ENCODE measurements at regions of chr3 and their contacts with region 1.

Region 1: GRCh38 chr3:32934150-32934742 is 17.2 kb upstream of the CCR4 start:
- DNase-seq: no peak
- ATAC-seq: no peak
- H3K4me3 ChIP-seq: no peak overlapping the region
- H3K27ac ChIP-seq: no peak overlapping the region
- H3K4me1 ChIP-seq: no peaks in the 10 kb centered on the region
- H3K27me3 ChIP-seq: no peaks in the 10 kb centered on the region

Region 2: DNA sequence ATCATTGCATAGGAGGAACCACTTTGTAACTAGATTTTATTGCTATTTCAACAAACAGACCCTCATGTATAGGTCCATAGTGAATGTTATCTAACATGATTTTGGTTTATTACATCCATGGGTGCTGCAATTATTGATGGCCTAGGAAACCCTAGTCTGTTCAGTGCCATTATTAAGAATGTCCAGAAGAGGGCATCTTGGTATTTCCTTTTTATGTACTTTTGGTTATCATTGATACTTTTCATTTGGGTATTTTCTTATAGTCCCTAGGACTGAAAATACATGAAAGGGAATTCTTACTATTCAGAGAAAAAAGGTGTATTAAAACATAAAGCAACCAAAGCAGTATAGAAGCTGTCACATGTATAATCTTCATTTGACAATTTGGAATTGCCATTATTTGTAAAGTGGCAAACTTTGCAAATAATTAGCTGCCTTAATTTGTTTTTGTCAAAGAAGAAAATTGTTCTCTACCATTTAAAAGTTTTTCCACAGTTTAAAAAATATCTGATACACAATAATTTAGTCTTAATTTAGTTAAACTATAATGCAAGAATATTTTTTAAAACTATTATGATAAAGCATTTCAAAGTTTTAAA is 200.5 kb before region 1 on chr3:
- intact Hi-C with region 1: loop called in 1 of 2 experiments (anchors 10 kb)
- DNase-seq: no peak
- ATAC-seq: no peak
- H3K4me3 ChIP-seq: no peak overlapping the region
- H3K27ac ChIP-seq: no peak overlapping the region
- H3K4me1 ChIP-seq: no peaks in the 10 kb centered on the region
- H3K27me3 ChIP-seq: no peaks in the 10 kb centered on the region

Region 3: DNA sequence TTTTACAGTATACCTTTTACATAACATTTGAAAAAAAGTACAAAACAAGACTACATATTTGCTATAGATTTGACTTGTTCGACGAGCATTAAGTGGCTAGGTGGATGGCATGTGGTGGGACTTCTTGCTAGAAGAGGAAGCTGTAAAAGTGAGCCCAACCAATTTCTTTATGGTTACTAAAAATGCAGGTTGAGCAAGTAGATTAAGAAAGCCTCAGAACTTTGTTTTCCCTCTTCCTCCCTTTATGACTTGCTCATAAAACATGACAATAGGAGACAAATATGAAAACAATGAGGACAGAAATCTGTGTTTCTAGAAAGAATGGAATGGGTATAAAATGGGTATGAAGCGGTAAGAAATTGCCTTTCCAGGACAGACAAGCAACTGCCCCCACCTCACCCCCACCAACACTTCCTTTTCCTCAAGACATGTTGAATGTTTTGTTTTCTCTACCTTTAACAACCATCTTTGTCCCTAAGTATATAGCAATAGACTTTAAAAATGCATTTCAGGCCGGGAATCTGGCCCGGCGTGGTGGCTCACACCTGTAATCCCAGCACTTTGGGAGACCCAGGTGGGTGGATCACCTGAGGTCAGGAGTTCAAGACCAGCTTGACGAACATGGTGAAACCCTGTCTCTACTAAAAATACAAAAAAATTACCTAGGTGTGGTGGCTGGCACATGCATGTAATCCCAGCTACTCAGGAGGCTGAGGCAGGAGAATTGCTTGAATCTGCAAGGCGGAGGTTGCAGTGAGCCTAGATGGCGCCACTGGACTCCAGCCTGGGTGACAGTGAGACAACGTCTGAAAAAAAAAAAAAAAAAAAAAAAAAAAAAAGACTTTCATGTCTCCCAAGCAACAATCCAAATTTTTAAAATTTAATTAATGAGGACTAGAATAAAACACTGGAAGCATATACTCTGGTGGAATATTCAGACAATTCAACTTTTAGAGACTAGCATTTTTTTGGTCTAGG is 32.5 kb before region 1 on chr3:
- intact Hi-C with region 1: no loop called
- DNase-seq: no peak
- ATAC-seq: no peak
- H3K4me3 ChIP-seq: no peak overlapping the region
- H3K27ac ChIP-seq: no peak overlapping the region
- H3K4me1 ChIP-seq: no peaks in the 10 kb centered on the region
- H3K27me3 ChIP-seq: no peaks in the 10 kb centered on the region